Calu3 (cell line): ENCODE measurements at regions of chr17 and their contacts with region 1.

Region 1: DNA sequence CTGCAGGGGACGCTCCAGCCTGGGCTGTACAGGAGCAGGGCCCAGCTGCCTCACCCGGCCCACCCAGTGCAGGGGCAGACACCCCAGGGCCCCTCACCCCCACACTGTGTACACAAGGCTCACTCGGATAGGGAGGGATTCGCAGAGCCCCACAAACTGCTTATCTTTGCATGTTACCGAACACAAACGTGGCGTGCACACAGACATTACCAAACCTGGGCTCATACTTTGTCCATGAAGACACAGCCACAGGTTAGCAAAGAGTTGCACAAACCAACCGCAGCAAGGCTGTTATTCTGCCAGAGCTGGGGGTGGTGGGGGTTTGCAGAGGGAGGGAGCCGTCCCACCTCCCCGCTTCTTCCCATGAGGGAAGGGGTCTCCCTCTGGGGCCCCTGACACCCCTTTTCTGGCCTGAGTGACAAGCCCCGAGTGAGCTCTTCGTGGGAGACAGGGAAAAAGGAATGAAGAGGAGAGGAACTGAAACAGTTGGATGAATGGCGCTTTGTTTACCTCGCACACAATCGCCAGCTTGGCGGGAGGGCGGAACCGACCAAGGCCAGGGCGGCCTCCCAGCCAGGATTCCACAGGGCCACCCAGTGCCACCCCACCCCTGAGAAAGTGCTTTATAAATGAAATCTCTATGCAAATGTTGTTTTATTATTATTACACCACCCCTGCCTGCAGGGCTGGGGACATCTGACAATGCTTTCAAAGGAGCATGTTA is 434 bp upstream of the CPSF4L start:
- DNase-seq: peak; percentile 77
- H3K4me3 Mint-ChIP-seq: peak overlapping the region; percentile 35
- H3K27ac Mint-ChIP-seq: peak overlapping the region; percentile 28
- H3K4me1 Mint-ChIP-seq: peaks cover 30% of the 10 kb centered on the region
- H3K27me3 Mint-ChIP-seq: no peaks in the 10 kb centered on the region
- CTCF ChIP-seq: no peak

Region 2: GRCh38 chr17:73304971-73305812 is 43.1 kb after region 1 on chr17:
- CTCF ChIA-PET with region 1: interaction called, 10 read pairs
- intact Hi-C with region 1: loop called (anchors 2 kb)
- DNase-seq: peak; percentile 63
- H3K4me3 Mint-ChIP-seq: peak overlapping the region; percentile 62
- H3K27ac Mint-ChIP-seq: peak overlapping the region; percentile 55
- H3K4me1 Mint-ChIP-seq: peaks cover 68% of the 10 kb centered on the region
- H3K27me3 Mint-ChIP-seq: no peaks in the 10 kb centered on the region
- CTCF ChIP-seq: no peak